Dorsolateral prefrontal cortex (tissue), 120 donors: ENCODE measurements at regions of chr1 and their contacts with region 1.

Region 1: DNA sequence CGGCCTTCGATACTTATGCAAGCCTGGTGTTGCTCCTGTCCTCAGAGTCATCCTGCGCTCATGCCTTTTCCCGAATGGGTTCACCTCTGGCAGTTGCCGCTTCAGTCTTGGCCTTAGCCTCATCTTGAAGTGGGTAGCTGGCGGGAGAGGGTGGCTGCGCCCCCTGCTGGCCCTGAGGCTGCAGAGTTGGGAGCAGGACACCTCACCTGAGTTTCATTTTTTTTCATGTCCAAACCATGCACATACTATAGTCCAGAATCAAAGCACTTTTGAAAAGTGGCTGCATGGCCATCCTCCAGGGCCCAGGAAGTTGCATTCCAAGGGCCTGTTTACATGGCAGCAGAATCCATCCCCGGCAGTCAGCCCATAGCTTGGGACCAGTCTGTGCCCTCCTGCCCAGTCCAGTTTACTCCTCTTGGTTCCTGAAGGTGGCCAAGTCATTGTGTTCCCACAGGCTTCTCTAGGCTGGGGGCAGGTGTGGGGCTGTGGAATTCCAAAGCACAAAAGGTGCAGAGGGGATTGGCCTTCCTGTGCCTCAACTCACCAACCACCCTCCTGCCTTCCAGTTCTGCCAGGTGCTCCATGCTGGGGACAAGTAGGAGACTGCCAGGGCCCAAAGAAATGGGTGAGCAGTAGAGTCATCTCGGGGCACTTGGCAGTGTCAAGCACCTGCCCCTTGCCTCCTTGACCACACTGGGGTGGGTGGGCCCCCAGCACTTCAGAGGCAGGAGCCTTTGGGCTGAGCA is 44.0 kb downstream of the YARS1 start:
- DNase-seq: peak; percentile 70 to 86 (median 79)
- H3K4me3 ChIP-seq: no peak overlapping the region
- H3K27ac ChIP-seq: peak overlapping the region in 8 of 59 donors; percentile 4 to 36 (median 22)
- H3K27me3 ChIP-seq: no peaks in the 10 kb centered on the region
- CTCF ChIP-seq: peak; percentile 77 to 94 (median 90)

Region 2: GRCh38 chr1:32454726-32455125 is 318.5 kb before region 1 on chr1:
- intact Hi-C with region 1: loop called in 1 of 2 experiments (anchors 5 kb)
- DNase-seq: peak in 5 of 10 donors; percentile 32 to 68 (median 49)
- H3K4me3 ChIP-seq: no peak overlapping the region
- H3K27ac ChIP-seq: peak overlapping the region in 33 of 59 donors; percentile 8 to 83 (median 50)
- H3K27me3 ChIP-seq: no peaks in the 10 kb centered on the region
- CTCF ChIP-seq: no peak

Region 3: GRCh38 chr1:32521165-32521564 is 252.0 kb before region 1 on chr1:
- intact Hi-C with region 1: loop called in 1 of 2 experiments (anchors 10 kb)
- DNase-seq: no peak
- H3K4me3 ChIP-seq: peak overlapping the region in 16 of 59 donors; percentile 24 to 60 (median 51)
- H3K27ac ChIP-seq: no peak overlapping the region
- H3K27me3 ChIP-seq: no peaks in the 10 kb centered on the region
- CTCF ChIP-seq: no peak

Region 4: DNA sequence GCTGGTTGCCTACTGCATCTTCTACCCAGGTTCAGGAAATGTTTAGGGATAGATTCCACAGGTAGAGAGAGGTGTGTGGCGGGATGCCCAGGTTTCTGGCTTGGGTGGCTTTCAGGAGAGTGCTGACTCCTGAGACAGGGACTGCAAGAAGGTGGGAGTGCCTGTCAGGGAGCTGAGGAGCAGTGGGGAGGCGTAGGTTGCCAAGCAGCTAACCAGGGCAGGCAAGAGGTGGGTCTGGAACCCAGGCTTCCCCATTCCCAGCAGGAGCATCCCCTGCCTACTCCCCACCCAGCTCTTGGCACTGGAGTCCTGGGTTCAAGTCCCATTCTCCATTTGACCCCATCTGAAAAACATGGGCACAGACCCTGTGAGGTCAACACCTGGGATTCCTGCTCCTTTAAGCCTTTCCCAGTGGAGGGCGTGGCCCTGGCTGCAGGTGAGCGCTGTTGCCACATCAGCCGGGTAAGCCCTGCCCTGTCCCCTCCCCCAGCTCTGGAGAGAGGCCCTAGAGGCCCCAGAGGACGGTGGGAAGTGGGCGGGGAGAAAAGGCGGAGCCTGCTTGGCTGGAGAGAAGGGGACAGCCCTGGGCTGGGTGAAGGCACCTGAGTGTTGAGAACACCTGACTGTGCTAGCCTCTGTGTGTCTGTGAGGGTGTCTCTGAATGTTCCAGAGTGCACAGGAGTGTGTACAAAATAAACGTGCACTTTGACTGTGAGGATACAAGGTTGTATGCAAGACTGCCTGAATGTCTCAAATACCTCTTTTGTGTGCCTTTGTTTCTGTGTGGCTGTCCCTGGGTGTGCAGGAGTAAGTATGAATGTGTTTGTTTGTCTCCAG is 56.7 kb before region 1 on chr1:
- intact Hi-C with region 1: loop called (anchors 2 to 5 kb)
- DNase-seq: no peak
- H3K4me3 ChIP-seq: no peak overlapping the region
- H3K27ac ChIP-seq: no peak overlapping the region
- H3K27me3 ChIP-seq: no peaks in the 10 kb centered on the region
- CTCF ChIP-seq: no peak